Mammary epithelial cell (primary cell): ENCODE measurements at regions of chr6 and their contacts with region 1.

Region 1: DNA sequence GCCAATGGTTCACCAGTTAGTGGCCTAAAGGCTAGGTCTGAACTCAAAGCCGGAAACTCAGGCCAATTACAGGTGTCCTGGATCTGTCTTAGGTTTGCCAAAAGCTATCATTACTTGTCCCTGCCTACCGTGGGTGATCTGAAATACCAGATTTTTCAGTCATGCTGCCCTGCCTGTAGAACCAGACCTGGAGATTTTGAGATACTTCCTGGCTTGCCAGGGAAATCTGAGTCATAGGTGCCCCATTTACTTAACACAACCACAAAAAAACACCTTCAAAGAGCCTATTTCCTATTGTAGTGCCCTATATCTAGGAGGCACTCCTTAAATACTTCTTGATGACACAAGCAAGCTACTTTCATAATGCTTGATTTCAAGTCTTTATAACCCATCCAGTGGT is 13.9 kb upstream of the RANBP9 start:
- DNase-seq: peak; percentile 94
- H3K4me3 ChIP-seq: no peak overlapping the region
- H3K27ac ChIP-seq: peak overlapping the region; percentile 79
- H3K4me1 ChIP-seq: peaks cover 52% of the 10 kb centered on the region
- H3K27me3 ChIP-seq: no peaks in the 10 kb centered on the region
- CTCF ChIP-seq: no peak

Region 2: DNA sequence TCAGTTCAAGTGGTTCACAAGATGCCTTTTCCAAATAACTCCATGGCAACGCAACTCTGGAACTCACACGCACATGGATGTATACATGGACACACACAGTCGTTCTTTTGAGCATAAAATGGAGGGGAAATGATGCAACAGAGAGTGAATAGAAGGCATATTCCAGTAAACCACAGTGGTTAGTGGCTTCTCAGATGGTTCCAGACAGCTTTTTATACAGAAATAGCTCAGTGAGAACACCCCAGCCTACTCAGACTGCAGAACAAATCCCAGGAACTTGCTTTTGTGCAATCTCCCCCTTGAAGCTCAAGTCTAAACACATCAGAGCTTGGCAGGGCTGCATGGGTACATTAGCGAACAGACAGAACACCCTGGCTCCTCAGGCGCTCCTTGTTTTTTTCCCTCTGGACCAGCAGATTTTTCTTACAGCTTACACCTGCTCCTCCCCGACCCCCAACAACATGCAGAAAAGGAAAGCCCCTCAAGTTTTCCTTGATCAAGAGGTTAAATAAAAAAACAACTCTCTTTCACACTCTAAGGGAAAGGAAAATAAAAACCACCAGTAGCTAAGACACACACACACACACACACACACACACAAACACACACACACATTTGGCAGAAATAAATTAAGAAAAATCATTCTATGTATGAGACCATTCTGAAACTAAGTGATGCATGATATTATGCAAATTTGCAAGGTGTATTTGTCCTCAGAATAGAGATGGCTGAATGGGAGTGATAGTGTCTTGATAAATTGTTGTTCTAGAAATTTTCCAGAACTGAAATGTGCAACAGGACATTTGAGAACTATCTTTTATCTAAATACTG is 37.3 kb after region 1 on chr6:
- CTCF ChIA-PET with region 1: no interaction called
- dilution Hi-C with region 1: loop called (anchors 5 kb)
- in situ Hi-C with region 1: no loop called
- intact Hi-C with region 1: no loop called
- DNase-seq: peak; percentile 93
- H3K4me3 ChIP-seq: peak overlapping the region in 1 of 3 experiments; percentile 14
- H3K27ac ChIP-seq: peak overlapping the region; percentile 71
- H3K4me1 ChIP-seq: peaks cover 51% of the 10 kb centered on the region
- H3K27me3 ChIP-seq: no peaks in the 10 kb centered on the region
- CTCF ChIP-seq: no peak